Caco-2 (cell line): ENCODE measurements at regions of chr11 and their contacts with region 1.

Region 1: DNA sequence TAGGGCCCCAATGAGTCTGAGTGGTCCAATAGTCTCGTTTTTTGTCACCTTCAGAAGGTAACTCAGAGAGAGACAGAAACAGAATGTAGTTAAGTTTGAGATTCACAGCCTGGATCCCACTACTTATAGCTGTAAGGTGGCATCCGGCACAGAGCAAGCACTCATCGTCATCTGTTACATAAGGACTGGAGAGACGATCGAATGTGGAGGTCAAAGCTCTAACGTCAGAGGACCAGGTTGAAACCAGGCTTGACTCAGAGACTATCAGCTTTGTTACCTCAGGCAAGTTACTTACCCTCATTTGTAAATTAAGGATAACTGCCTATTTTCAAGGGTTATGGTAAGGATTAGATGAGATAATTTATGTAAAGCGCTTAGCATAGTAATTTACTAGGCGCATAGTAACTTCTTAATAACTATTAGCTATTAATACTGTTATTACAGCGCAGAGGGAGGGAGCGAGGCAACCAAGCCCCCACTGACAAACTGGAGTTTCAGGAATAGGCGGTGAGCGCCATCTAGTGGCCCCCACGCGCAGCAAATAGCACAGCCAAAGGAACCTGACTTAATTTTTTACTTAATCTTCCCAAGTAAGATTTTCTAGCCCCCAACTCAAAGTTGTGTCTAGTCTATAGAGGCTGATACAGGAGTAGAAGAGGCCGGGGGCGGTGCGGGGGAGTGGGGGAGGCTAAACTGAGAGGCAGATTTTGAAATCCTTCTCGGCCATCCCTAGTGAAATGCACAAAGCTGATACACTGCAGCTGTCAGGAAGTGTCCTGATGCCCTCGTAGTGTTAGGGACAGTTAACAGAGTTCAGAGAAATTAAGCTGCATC is 29.0 kb upstream of the API5 start:
- DNase-seq: peak; percentile 46 to 56
- H3K4me3 ChIP-seq: no peak overlapping the region
- H3K4me3 Mint-ChIP-seq: no peak overlapping the region
- H3K27ac Mint-ChIP-seq: no peak overlapping the region
- H3K4me1 ChIP-seq: no peaks in the 10 kb centered on the region
- H3K4me1 Mint-ChIP-seq: no peaks in the 10 kb centered on the region
- H3K27me3 ChIP-seq: no peaks in the 10 kb centered on the region
- H3K27me3 Mint-ChIP-seq: peaks cover 2% of the 10 kb centered on the region
- CTCF ChIP-seq: peak; percentile 86 to 96

Region 2: DNA sequence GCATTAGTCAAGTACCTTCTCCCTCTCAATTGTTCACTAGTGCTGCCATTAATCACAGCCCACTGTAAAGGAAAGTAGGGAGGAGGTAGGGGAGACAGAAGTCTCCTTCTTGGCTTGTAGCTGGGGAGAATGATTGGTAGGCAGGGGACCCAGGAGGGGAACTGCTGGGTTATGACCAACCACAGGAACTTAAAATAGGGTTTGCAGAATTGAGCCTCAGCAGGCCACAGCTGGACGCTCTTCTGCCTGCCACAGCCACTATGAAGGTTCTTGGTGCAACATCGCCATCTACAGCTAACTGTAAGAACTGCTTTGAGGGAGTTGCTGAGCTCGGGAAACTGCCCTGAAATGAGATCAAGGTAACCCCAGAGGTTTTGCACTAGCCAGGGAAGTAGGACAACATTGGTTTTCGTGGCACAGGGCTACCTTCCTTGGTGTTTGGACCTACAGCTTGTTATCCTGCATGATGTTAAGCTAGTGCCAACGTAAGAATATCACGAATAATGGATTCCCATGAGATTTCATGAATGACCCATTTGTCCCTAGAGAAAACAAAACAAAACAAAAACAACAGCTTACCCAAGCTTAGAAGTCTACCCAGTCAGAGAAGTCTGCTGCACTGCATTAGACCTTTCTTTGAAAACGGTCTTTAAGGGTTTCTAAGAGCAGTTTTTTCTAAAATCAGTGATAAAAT is 758.1 kb before region 1 on chr11:
- CTCF ChIA-PET with region 1: no interaction called
- POLR2A ChIA-PET with region 1: no interaction called
- intact Hi-C with region 1: loop called (anchors 5 kb)
- DNase-seq: peak; percentile 56 to 72
- H3K4me3 ChIP-seq: no peak overlapping the region
- H3K4me3 Mint-ChIP-seq: no peak overlapping the region
- H3K27ac Mint-ChIP-seq: no peak overlapping the region
- H3K4me1 ChIP-seq: no peaks in the 10 kb centered on the region
- H3K4me1 Mint-ChIP-seq: no peaks in the 10 kb centered on the region
- H3K27me3 ChIP-seq: no peaks in the 10 kb centered on the region
- H3K27me3 Mint-ChIP-seq: peaks cover 2% of the 10 kb centered on the region
- CTCF ChIP-seq: peak; percentile 75 to 81

Region 3: GRCh38 chr11:42974505-42975504 is 308.0 kb before region 1 on chr11:
- CTCF ChIA-PET with region 1: no interaction called
- POLR2A ChIA-PET with region 1: no interaction called
- intact Hi-C with region 1: loop called (anchors 1 kb)
- DNase-seq: peak in 1 of 2 experiments; percentile 7
- H3K4me3 ChIP-seq: no peak overlapping the region
- H3K4me3 Mint-ChIP-seq: no peak overlapping the region
- H3K27ac Mint-ChIP-seq: no peak overlapping the region
- H3K4me1 ChIP-seq: no peaks in the 10 kb centered on the region
- H3K4me1 Mint-ChIP-seq: no peaks in the 10 kb centered on the region
- H3K27me3 ChIP-seq: no peaks in the 10 kb centered on the region
- H3K27me3 Mint-ChIP-seq: peaks cover 4% of the 10 kb centered on the region
- CTCF ChIP-seq: peak in 1 of 2 experiments; percentile 6

Region 4: DNA sequence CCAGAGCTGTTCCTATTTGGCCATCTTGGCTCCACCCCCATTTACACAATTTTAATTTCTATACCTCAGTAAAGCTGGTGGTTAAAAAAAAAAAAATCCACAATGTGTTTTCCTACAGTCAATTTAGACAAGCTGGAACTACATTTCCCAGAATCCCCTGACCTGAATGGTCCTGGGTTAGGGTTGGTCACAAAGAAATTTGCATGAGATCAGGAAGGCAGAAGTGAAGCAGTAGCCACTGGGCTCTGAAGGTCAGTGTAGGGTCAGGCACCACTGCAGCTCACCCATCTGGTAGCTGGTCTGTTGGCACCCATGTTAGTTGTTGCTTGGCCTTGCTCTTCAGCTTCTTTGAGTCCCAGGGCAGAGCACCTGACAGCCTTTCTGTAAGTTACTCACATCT is 181.7 kb before region 1 on chr11:
- CTCF ChIA-PET with region 1: no interaction called
- POLR2A ChIA-PET with region 1: no interaction called
- intact Hi-C with region 1: no loop called
- DNase-seq: no peak
- H3K4me3 ChIP-seq: no peak overlapping the region
- H3K4me3 Mint-ChIP-seq: no peak overlapping the region
- H3K27ac Mint-ChIP-seq: no peak overlapping the region
- H3K4me1 ChIP-seq: no peaks in the 10 kb centered on the region
- H3K4me1 Mint-ChIP-seq: no peaks in the 10 kb centered on the region
- H3K27me3 ChIP-seq: no peaks in the 10 kb centered on the region
- H3K27me3 Mint-ChIP-seq: peaks cover 3% of the 10 kb centered on the region
- CTCF ChIP-seq: no peak

Region 5: GRCh38 chr11:43130616-43131015 is 152.2 kb before region 1 on chr11:
- CTCF ChIA-PET with region 1: interaction called, 9 read pairs
- POLR2A ChIA-PET with region 1: no interaction called
- intact Hi-C with region 1: loop called (anchors 5 kb)
- DNase-seq: peak; percentile 36 to 46
- H3K4me3 ChIP-seq: no peak overlapping the region
- H3K4me3 Mint-ChIP-seq: no peak overlapping the region
- H3K27ac Mint-ChIP-seq: no peak overlapping the region
- H3K4me1 ChIP-seq: peaks cover 10% of the 10 kb centered on the region
- H3K4me1 Mint-ChIP-seq: peaks cover 5% of the 10 kb centered on the region
- H3K27me3 ChIP-seq: no peaks in the 10 kb centered on the region
- H3K27me3 Mint-ChIP-seq: peaks cover 2% of the 10 kb centered on the region
- CTCF ChIP-seq: peak in 1 of 2 experiments; percentile 12

Region 6: DNA sequence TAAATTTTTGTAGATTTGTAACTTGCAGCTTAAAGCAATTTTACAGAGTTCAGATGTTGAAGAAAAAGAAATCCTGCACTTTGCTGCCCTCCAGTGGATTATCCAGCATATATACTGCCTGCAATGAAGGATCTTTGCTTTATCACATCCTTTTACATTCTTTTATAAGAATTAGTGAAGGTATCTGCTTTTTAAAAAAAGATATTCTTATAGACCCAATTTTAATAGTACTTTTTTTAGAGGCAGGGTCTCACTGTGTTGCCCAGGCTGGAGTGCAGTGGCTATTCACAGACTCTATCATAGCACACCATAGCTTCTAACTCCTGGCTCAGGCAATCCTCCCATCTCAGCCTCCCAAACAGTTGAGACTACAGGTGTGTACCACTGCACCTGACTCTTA is 136.6 kb after region 1 on chr11:
- CTCF ChIA-PET with region 1: interaction called, 5 read pairs
- POLR2A ChIA-PET with region 1: no interaction called
- intact Hi-C with region 1: loop called (anchors 1 kb)
- DNase-seq: peak in 1 of 2 experiments; percentile 55
- H3K4me3 ChIP-seq: no peak overlapping the region
- H3K4me3 Mint-ChIP-seq: no peak overlapping the region
- H3K27ac Mint-ChIP-seq: no peak overlapping the region
- H3K4me1 ChIP-seq: no peaks in the 10 kb centered on the region
- H3K4me1 Mint-ChIP-seq: no peaks in the 10 kb centered on the region
- H3K27me3 ChIP-seq: no peaks in the 10 kb centered on the region
- H3K27me3 Mint-ChIP-seq: no peaks in the 10 kb centered on the region
- CTCF ChIP-seq: peak; percentile 63 to 65